Dendritic cell treated with granulocyte-macrophage colony-stimulating factor and Interleukin-4, amounts not matched to agents 40 ng/mL and 50 ng/mL, for 4 days (primary cell): ENCODE measurements at regions of chr13 and their contacts with region 1.

Region 1: GRCh38 chr13:91133941-91134802 is 213.3 kb upstream of the MIR17HG start:
- H3K4me3 Mint-ChIP-seq: peak overlapping the region; percentile 30
- H3K27ac Mint-ChIP-seq: peak overlapping the region; percentile 69
- H3K4me1 Mint-ChIP-seq: peaks cover 17% of the 10 kb centered on the region
- H3K27me3 Mint-ChIP-seq: no peaks in the 10 kb centered on the region

Region 2: DNA sequence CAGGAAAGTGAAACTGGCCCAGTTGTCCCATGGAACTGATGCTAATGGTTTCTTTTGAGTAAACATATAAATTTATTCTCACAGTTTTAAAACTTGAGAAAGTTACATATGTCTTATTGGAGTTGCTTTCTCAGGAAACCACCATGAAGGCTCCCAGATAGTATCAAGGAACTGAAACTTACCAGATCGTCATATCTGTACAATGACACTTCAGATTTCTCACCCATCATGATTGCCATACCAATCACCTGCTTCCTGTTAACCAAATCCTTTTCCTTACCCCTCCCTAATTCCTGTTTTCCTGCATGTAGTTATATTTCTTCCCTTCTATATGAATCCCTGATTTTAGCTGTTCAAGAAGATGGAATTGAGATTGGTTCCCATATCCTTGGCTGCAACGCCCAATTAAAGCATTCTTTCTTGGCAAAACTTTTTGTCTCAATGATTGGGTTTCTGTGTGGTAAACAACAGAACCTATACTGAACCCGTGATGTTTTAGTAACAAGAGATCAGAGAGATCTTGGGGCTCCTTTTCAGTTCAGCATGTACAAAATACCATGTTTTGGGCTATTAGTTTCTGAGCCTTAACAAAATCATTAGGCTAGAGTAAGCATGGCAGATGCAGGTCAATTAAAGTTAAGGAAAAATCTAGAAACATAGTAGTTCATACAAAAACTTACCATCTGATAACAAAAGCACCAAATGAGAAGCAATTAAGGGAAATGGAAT is 568.0 kb before region 1 on chr13:
- intact Hi-C with region 1: no loop called
- H3K4me3 Mint-ChIP-seq: no peak overlapping the region
- H3K27ac Mint-ChIP-seq: peak overlapping the region; percentile 9
- H3K4me1 Mint-ChIP-seq: peaks cover 13% of the 10 kb centered on the region
- H3K27me3 Mint-ChIP-seq: no peaks in the 10 kb centered on the region

Region 3: DNA sequence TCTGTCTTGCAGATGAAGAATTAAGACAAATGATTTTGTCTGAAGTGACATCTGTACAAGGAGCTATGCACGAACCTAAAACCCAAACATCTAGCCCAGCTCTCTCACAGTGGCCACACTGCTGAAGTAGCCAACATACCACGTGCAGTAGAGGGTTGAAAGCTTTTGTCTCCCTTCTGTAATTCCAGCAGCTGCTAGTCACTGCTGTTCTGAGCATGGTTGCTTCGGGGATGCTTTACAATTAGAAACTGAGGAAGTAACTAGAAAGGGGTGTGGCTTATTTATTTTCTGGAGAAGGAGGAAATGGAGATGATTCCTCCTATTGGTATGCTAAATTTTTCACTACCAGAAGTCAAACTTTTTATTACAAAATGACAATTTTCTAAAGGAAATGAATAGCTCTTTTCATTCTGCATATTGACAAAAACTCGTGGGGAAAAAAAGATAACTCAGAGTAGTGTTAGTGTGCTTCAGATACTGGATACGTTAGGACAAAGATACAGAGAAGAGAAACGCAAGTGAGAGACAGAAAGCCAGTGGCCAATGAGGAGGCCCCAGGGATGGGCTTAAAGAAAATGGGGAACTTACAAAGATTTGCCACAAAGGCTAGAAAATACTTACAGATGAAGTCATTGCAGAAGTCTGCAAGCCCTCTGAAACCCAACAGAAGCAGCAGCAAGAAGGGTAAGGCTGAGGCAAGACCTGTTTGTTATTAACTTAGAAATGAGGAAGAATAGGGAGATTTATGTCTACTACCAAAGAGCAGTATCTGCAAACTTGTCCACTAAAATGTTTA is 20.6 kb after region 1 on chr13:
- intact Hi-C with region 1: loop called (anchors 1 kb)
- H3K4me3 Mint-ChIP-seq: peak overlapping the region; percentile 71
- H3K27ac Mint-ChIP-seq: peak overlapping the region; percentile 97
- H3K4me1 Mint-ChIP-seq: peaks cover 33% of the 10 kb centered on the region
- H3K27me3 Mint-ChIP-seq: peaks cover 5% of the 10 kb centered on the region

Region 4: DNA sequence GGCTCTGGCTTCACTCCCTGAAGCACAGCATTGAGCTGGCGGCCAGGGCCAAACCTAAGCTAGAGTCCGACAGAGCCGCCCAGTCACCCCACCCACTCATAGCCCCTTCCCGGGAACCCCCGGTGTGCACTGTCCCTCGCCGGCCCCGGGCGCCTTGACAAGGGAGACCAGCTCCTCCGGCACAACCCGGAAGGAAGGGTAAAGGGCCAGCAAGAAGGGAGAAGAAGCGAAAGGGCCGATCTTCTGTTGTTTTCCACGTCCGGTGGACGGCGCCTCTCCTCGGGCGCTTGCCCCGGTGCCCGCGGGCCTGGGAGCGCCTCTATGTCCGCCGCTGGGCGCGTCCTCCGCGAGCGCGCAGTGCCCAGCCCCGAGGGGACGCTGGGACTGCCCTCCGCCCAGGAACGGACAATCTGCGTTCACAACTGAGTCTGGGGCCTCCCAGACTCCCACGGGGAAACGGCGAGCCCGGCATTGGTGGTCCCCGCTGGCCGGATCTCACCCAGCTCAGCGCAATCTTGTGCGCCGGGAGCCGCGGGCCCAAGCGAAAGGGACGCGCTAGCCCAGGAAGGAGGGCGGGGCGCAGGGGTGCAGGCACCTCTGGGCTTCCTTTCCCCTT is 40.8 kb after region 1 on chr13:
- intact Hi-C with region 1: loop called (anchors 5 kb)
- H3K4me3 Mint-ChIP-seq: peak overlapping the region; percentile 75
- H3K27ac Mint-ChIP-seq: peak overlapping the region; percentile 60
- H3K4me1 Mint-ChIP-seq: peaks cover 19% of the 10 kb centered on the region
- H3K27me3 Mint-ChIP-seq: peaks cover 14% of the 10 kb centered on the region

Region 5: GRCh38 chr13:91185294-91185863 is 51.2 kb after region 1 on chr13:
- intact Hi-C with region 1: no loop called
- H3K4me3 Mint-ChIP-seq: no peak overlapping the region
- H3K27ac Mint-ChIP-seq: no peak overlapping the region
- H3K4me1 Mint-ChIP-seq: no peaks in the 10 kb centered on the region
- H3K27me3 Mint-ChIP-seq: no peaks in the 10 kb centered on the region

Region 6: GRCh38 chr13:91247768-91248167 is 113.6 kb after region 1 on chr13:
- intact Hi-C with region 1: loop called (anchors 5 kb)
- H3K4me3 Mint-ChIP-seq: no peak overlapping the region
- H3K27ac Mint-ChIP-seq: no peak overlapping the region
- H3K4me1 Mint-ChIP-seq: peaks cover 19% of the 10 kb centered on the region
- H3K27me3 Mint-ChIP-seq: no peaks in the 10 kb centered on the region

Region 7: GRCh38 chr13:91278888-91279287 is 144.7 kb after region 1 on chr13:
- intact Hi-C with region 1: no loop called
- H3K4me3 Mint-ChIP-seq: no peak overlapping the region
- H3K27ac Mint-ChIP-seq: no peak overlapping the region
- H3K4me1 Mint-ChIP-seq: peaks cover 28% of the 10 kb centered on the region
- H3K27me3 Mint-ChIP-seq: no peaks in the 10 kb centered on the region

Region 8: GRCh38 chr13:91348906-91349435 is 214.8 kb after region 1 on chr13:
- intact Hi-C with region 1: loop called (anchors 5 kb)
- H3K4me3 Mint-ChIP-seq: peak overlapping the region; percentile 74
- H3K27ac Mint-ChIP-seq: peak overlapping the region; percentile 77
- H3K4me1 Mint-ChIP-seq: peaks cover 20% of the 10 kb centered on the region
- H3K27me3 Mint-ChIP-seq: peaks cover 5% of the 10 kb centered on the region

Region 9: DNA sequence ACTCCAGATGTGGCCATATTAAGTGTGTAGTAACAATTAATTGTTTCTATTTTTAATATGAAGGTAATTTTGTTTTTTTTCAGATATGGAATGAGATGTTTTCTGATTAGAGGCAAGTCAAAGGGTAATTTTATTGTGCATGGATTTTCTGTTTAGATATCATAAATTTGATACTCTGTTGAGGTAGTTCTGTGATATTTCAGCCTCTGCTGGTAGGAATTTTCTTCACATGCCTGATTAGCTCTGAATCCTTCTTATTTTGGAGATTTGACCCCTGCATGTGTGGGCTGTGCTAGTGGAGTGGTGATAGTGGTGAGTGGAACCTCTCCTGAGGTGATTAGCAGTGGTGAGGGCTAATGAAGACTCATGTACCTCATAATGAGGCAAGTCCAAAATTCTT is 565.7 kb after region 1 on chr13:
- intact Hi-C with region 1: no loop called
- H3K4me3 Mint-ChIP-seq: no peak overlapping the region
- H3K27ac Mint-ChIP-seq: no peak overlapping the region
- H3K4me1 Mint-ChIP-seq: no peaks in the 10 kb centered on the region
- H3K27me3 Mint-ChIP-seq: no peaks in the 10 kb centered on the region